Activated CD4-positive, alpha-beta T cell treated with anti-CD3 and anti-CD28 coated beads, Interleukin-2, amount 10 ng/mL, durations not matched to agents 24 days and 14 days (primary cell): ENCODE measurements at regions of chr12 and their contacts with region 1.

Region 1: DNA sequence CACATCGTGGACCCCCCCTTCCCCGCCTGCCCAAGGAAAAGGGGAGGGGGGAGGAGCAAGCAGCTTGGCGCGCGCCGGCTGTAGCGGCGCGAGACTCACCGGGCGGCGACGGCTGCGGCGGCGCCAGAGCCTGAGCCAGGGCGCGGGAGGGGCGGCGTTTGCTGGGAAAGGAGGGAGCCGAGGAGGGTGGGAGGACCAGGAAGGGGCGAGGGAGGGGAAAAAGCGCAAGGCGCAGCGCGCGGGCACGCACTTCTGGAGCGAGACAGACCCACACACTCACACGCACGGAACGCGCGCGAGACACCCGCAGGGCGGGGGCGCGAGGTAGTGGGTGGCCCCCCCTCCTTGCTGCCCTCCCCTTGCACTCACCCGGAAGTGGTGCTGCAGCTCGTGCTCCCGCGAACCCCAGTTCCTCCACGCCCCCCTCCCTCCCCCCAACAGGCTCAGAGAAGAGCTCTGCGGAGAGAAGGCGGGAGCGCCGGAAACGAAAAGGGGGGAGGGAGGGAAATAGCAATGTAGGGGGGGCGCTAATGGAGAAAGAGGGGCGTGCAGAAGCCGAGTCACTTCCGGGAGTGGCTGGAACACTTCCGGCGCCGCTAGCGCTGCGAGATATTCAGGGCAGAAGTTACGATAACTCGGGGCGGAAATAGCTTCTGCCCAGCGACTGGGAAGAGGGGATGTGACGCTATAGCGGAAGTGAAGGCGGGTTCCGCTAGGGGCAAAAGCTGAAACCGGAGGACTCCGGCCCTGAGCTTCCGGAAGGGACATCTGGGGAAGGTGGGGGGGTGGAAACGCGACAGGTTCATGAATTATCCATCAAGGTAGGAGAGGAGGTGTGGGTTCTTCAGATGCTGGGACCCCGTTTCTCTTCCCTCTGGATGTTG is at the start of gene ZNF384:
- DNase-seq: peak; percentile 98
- H3K4me3 Mint-ChIP-seq: peak within 1 kb of the TSS; percentile 96
- H3K27ac Mint-ChIP-seq: peak within 1 kb of the TSS; percentile 93
- H3K4me1 Mint-ChIP-seq: peaks cover 38% of the 10 kb centered on the region
- H3K27me3 Mint-ChIP-seq: no peaks in the 10 kb centered on the region
- total RNA-seq, gene ZNF384: 83.6 and 84.4 TPM in 2 replicates

Region 2: DNA sequence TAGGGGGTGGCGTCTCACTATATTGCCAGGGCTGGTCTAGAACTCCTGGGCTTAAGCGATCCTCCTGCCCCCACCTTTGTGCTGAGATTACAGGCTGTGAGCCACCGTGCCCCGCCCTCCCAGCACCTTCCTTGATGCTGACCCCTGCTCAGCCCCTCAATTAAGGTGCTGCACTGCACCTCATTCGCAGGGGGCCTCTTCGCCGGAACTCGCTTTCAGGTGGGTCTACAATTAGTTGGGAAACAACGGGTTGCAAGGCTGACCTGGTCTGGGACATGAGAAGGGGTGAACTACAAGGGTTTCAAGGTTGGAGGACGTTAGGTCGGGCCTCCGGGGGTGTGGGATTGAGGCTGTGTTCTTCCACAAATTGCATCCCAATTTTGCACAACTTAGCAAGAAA is 119.9 kb before region 1 on chr12:
- intact Hi-C with region 1: loop called (anchors 2 kb)
- DNase-seq: no peak
- H3K4me3 Mint-ChIP-seq: peak overlapping the region; percentile 98
- H3K27ac Mint-ChIP-seq: no peak overlapping the region
- H3K4me1 Mint-ChIP-seq: peaks cover 28% of the 10 kb centered on the region
- H3K27me3 Mint-ChIP-seq: no peaks in the 10 kb centered on the region

Region 3: DNA sequence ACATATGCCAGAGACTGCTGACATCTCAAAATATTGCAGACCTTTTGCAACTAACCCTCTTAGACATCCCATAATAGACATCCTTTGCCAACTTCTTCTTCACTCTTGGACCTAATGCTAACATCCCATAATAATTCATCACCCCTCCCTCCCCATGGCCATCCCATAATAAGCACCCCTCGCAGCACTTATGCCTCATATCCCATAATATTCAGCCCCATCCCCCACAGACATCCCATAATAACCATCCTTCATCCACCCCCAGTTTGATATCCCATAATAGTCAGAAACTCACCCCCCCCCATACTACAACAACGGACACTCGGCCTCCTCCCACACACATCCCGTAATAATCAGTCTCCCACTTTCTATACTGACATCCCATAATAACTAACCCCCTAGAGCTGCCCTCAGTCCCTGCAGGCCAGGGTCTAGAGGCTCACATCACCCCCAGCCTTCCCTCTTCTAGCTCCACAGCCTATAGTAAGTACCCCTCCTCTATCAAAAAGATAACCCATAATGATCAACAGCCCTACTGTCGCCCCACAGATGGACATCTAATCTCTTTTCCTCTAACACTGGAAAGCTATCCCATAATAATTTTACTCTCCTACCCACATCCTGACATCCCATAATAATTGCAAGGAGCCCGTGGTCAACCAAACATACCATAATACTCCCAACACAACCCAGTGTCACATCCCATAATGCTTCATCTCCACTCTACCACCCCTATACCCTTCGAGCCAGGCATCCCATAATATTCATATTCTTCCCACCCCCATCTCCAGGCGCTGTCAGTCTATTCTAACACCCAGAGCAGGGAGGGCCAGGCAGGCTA is 81.3 kb before region 1 on chr12:
- intact Hi-C with region 1: loop called (anchors 1 kb)
- DNase-seq: peak; percentile 89
- H3K4me3 Mint-ChIP-seq: no peak overlapping the region
- H3K27ac Mint-ChIP-seq: no peak overlapping the region
- H3K4me1 Mint-ChIP-seq: peaks cover 45% of the 10 kb centered on the region
- H3K27me3 Mint-ChIP-seq: no peaks in the 10 kb centered on the region

Region 4: DNA sequence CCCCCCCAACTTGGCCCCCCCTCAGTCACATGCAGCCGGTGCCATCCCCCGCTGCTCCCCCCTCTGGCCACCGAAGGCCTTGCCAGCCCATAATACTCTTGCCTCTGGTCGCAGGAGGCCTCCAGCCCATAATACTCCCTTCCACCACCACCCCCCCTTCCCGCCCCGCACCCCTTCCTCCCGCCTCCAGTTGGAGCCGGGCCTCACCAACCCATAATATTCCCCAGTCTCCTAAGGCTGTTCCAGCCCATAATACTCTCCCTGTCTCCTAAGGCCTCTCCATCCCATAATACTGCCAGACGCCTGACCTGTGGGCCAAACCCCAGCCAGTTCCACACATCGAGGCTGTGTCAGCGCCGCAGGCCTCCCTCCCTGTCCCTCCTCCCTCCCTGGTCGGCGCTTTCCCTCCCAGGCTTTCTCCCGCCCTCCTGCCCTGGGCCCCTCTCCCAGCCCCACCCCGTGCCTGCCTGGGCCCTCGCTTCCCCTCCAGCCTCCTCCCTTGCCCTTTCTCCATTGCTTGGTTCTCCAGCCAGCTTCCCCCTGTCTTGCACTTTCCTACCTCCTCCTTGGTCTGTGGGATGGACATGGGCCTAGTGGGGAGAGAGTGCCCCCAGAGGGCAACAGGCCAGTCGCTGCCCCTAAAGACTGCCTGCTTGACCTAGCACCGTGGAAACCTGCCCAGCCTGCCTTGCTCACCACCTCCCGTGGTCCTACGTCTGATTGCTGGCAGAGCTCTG is 75.3 kb before region 1 on chr12:
- intact Hi-C with region 1: loop called (anchors 2 kb)
- DNase-seq: peak; percentile 69
- H3K4me3 Mint-ChIP-seq: no peak overlapping the region
- H3K27ac Mint-ChIP-seq: peak overlapping the region; percentile 39
- H3K4me1 Mint-ChIP-seq: peaks cover 34% of the 10 kb centered on the region
- H3K27me3 Mint-ChIP-seq: no peaks in the 10 kb centered on the region

Region 5: GRCh38 chr12:6723607-6724396 is 34.6 kb after region 1 on chr12 and contains the start of gene COPS7A:
- intact Hi-C with region 1: loop called (anchors 1 kb)
- DNase-seq: peak; percentile 99
- H3K4me3 Mint-ChIP-seq: peak within 1 kb of the TSS; percentile 89
- H3K27ac Mint-ChIP-seq: peak within 1 kb of the TSS; percentile 98
- H3K4me1 Mint-ChIP-seq: peaks cover 27% of the 10 kb centered on the region
- H3K27me3 Mint-ChIP-seq: peaks cover 3% of the 10 kb centered on the region
- total RNA-seq, gene COPS7A: 39.5 and 44.8 TPM in 2 replicates

Region 6: GRCh38 chr12:6778574-6779550 is 89.6 kb after region 1 on chr12:
- intact Hi-C with region 1: loop called (anchors 2 kb)
- DNase-seq: peak; percentile 97
- H3K4me3 Mint-ChIP-seq: peak overlapping the region; percentile 84
- H3K27ac Mint-ChIP-seq: peak overlapping the region; percentile 88
- H3K4me1 Mint-ChIP-seq: peaks cover 76% of the 10 kb centered on the region
- H3K27me3 Mint-ChIP-seq: no peaks in the 10 kb centered on the region